ENCODE measurements at regions of chr11 and their contacts with region 1.

Region 1: DNA sequence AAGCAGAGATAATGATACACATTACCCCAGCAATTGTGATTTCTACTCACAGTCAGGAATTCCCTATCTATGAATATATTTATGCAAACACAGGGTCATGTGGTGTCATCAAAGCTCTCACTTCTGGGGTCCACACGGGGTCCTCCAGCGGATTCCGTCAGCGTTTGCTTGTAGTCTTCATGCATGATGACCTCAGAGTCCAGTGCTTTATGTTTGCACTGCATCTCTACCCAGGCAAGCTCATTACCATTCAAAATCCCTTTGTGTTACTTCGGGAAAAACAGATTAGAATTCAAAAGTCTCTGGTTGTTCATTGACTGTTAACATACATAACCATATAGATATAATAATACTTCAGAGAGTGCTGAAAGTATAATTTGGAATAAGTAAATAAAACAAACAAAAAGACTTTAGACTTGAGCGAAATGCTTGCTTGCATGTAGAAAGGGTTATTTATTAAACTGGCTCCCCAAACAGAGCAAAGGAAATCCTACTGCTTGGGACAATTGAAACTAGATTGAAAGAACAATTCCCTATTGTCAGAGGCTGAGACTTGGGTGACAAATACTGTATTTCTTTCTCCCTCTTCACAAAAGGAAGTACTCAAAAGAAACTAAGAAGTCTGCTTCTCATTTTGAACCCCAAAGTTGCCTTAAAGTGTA is 423.1 kb downstream of the ETS1 start:
- DNase-seq: no peak

Region 2: GRCh38 chr11:126329644-126330211 is 1834.5 kb before region 1 on chr11:
- intact Hi-C with region 1: loop called in 1 of 2 experiments (anchors 5 kb)
- DNase-seq: peak; percentile 36

Region 3: GRCh38 chr11:127859941-127860354 is 304.3 kb before region 1 on chr11:
- intact Hi-C with region 1: no loop called
- DNase-seq: no peak

Region 4: DNA sequence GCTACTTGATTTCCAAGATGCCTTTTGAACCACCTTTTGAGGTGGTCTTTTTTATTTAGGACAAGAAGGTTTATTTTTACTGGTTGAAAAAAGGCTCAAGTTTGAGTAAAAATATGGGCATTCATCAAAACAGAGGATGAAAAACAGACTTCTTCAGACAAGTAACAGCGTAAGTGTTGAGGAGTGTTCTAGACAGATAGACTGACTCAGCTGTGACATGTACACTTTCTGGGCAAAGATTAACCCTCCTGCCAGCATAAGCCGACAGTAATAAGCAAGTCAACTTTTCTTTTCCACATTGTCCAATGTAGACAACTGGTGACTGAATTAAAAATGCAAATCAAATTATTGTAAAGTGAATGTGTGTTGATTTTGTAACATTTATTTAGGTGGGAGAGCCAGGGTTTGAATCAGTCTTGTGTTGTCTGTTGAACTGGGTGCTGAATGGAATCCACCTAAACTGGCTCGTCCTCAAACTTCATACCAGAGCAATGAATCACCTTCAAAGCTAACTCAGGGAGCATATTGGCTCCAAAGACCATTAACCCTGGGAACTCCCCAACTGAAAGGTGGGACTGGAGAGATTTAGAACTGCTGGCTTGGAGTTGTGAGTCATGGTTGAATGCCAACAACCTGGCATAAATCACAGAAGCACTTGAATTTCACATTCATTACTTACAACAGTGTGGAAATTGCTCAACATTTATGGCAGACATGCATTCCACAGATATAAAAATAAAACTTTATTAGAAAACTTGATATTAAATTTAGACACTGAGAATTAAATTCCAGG is 46.1 kb after region 1 on chr11:
- intact Hi-C with region 1: no loop called
- DNase-seq: no peak

Region 5: GRCh38 chr11:128482512-128483191 is 318.4 kb after region 1 on chr11:
- intact Hi-C with region 1: no loop called
- DNase-seq: no peak

Region 6: DNA sequence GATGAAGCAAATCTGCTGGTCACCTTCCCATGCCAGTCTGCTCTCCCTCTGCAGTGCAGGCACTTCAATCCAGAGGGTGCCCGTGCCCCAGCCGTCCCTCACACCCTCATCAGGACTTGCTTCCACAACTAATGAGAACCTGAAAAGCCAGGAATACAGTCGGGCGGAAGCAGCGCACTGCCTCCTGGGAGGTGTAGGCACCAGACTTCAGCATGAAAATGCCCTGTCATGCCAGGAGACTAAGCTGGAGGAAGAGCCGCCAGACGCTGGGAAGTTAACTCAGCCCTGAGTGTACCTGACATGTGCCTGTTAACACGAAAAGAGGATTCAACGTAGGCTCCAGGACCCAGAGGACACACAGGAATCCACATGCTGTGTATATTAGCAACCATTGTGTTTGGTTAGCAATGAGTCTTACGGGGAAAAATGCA is 489.6 kb after region 1 on chr11:
- intact Hi-C with region 1: no loop called
- DNase-seq: peak; percentile 84

Region 7: DNA sequence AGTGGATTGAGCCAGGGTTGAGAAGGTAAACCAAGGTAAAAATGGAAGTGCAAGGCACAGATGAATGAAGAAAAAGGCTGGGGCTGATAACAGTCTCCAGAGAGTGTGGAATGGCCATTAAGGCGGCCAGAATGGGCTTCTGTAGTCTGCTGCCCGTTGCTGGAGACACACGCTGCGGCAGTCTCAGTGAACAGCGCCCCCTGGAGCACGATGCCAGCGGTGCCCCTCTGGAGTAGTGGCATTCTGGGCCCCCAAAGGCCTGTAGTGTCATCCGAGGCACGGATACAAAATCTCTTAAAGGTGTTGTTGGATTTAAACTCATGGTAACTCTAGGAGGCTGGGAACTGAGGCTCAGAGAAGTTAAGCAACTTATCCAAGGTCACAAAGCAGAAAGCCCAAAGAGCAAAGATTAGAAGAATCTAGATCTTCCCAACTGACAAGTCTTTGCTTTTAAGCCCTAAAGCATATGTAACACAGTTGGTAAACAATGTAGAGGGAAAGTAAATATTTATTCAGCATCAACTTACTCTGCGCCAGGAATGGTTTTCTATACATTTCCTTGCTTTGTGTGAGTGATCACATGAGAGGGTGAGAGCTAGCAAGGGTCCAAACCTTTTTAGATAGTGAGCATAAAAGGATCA is 684.7 kb after region 1 on chr11:
- intact Hi-C with region 1: loop called in 1 of 2 experiments (anchors 10 kb)
- DNase-seq: no peak

Measured in posterior vena cava (tissue), 2 donors.